ENCODE measurements at regions of chr4 and their contacts with region 1.

Region 1: GRCh38 chr4:98467627-98468072 is 190.8 kb downstream of the TSPAN5 start:
- DNase-seq: peak; percentile 66 to 78 (median 73)
- ATAC-seq: peak; percentile 58 to 97 (median 92)
- H3K4me3 ChIP-seq: peak overlapping the region in 11 of 12 donors; percentile 20 to 53 (median 45)
- H3K27ac ChIP-seq: no peak overlapping the region
- H3K4me1 ChIP-seq: peaks cover 0 to 20% (median 10%) of the 10 kb centered on the region in 12 donors
- H3K27me3 ChIP-seq: no peaks in the 10 kb centered on the region
- CTCF ChIP-seq: peak; percentile 57 to 82 (median 71)
- POLR2A ChIP-seq: no peak

Region 2: DNA sequence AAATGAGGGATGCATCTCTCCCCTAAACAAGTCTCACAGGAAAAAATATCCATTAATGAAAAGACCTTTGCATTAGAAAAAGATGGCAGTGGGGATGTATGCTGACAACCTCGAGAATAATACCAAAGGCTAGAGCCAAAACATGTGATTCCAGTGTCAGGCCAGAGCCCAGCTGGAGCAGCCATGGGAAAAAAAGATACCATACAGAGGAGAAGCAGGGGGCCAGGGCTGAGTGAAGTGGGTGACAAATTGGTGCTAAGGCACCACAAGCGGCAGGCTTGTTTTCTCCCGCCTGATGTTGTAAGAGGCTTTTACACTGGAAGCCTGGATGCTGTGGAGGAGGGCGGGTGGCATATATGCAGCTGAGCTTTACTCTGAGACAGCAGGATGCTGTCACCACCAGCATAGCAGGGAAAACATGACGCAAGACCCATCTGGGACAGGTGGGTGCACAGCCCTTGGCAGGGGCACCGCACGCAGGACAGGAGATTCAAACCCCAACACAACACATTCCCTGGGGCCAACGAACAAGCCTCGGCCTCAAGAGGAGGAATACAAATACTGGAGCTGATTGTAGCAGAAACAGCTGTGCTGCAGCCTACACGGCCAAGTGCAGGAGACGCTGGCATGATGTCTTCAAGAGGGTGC is 98.8 kb after region 1 on chr4:
- intact Hi-C with region 1: no loop called
- DNase-seq: peak in 1 of 5 donors; percentile 34
- ATAC-seq: peak in 3 of 4 donors; percentile 43 to 47 (median 45)
- H3K4me3 ChIP-seq: no peak overlapping the region
- H3K27ac ChIP-seq: peak overlapping the region in 5 of 12 donors; percentile 15 to 68 (median 41)
- H3K4me1 ChIP-seq: peaks cover 0 to 35% (median 14%) of the 10 kb centered on the region in 12 donors
- H3K27me3 ChIP-seq: no peaks in the 10 kb centered on the region
- CTCF ChIP-seq: no peak
- POLR2A ChIP-seq: no peak

Region 3: GRCh38 chr4:98626350-98626749 is 158.7 kb after region 1 on chr4:
- intact Hi-C with region 1: loop called in 3 of 10 experiments (anchors 5 to 10 kb)
- DNase-seq: peak in 3 of 5 donors; percentile 31 to 37 (median 34)
- ATAC-seq: peak in 3 of 4 donors; percentile 76 to 84 (median 78)
- H3K4me3 ChIP-seq: no peak overlapping the region
- H3K27ac ChIP-seq: peak overlapping the region in 1 of 12 donors; percentile 19
- H3K4me1 ChIP-seq: peaks cover 0 to 32% (median 5%) of the 10 kb centered on the region in 12 donors
- H3K27me3 ChIP-seq: no peaks in the 10 kb centered on the region
- CTCF ChIP-seq: no peak
- POLR2A ChIP-seq: no peak

Region 4: GRCh38 chr4:98658287-98659105 is 190.8 kb after region 1 on chr4 and contains the start of gene TSPAN5:
- intact Hi-C with region 1: loop called in 1 of 10 experiments (anchors 10 kb)
- DNase-seq: peak; percentile 78 to 90 (median 86)
- ATAC-seq: peak; percentile 87 to 97 (median 92)
- H3K4me3 ChIP-seq: peak within 1 kb of the TSS; percentile 58 to 98 (median 70)
- H3K27ac ChIP-seq: peak within 1 kb of the TSS in 9 of 12 donors; percentile 56 to 80 (median 76)
- H3K4me1 ChIP-seq: peaks cover 0 to 46% (median 13%) of the 10 kb centered on the region in 12 donors
- H3K27me3 ChIP-seq: peaks cover 0 to 14% (median 0%) of the 10 kb centered on the region in 9 donors
- CTCF ChIP-seq: no peak
- POLR2A ChIP-seq: no peak
- total RNA-seq, gene TSPAN5: 1.6 to 10.2 (median 5.6) TPM

Region 5: DNA sequence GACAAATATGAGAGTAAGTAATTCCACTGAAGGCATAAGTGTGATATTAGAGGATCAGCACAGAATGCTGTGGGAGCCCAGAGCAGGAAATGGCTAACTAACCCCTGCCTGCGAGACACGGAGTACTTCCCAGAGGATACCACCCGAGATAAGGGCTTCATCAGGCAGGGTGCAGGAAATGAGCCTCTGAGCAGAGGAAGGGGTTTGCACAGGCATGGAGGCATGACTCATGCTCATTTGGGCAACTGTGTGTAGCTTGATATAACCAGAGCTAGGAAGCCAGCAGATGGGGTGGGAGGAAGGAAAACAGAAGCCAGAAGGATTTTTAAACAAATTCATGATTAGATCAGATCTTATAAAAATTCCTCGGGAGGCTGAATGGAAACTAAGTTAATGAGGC is 260.8 kb after region 1 on chr4:
- intact Hi-C with region 1: no loop called
- DNase-seq: peak in 1 of 5 donors; percentile 28
- ATAC-seq: peak in 3 of 4 donors; percentile 28 to 77 (median 66)
- H3K4me3 ChIP-seq: no peak overlapping the region
- H3K27ac ChIP-seq: no peak overlapping the region
- H3K4me1 ChIP-seq: no peaks in the 10 kb centered on the region
- H3K27me3 ChIP-seq: no peaks in the 10 kb centered on the region
- CTCF ChIP-seq: no peak
- POLR2A ChIP-seq: no peak

Region 6: DNA sequence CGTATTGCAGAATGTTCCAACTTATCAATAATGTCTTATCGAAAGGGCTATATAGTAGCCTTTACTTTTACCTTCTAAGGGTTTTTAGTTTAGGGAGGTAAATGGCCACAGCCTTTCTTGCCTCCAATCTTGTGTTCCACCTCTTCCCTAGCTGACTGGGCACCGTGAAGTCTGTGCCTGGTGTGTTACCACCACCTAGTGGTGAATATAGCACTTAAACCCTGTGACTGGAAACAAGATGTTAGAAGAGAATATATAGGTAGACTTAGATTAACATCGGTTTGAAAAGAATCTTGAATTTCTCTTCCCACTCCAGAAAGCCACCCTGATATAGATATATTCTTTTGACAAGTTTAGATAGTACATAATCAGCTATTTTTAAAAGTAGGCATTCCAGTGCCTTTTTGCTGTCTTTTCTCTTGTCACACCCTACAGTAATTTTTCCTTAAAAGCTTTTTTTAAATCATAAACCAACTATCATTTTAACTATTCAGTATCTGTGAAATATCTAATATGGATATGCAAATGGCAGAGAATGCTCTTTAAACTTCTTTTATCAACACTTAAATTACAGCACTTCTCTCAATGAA is 995.3 kb after region 1 on chr4:
- intact Hi-C with region 1: loop called in 1 of 10 experiments (anchors 10 kb)
- DNase-seq: peak in 4 of 5 donors; percentile 20 to 33 (median 29)
- ATAC-seq: peak in 3 of 4 donors; percentile 72 to 88 (median 85)
- H3K4me3 ChIP-seq: no peak overlapping the region
- H3K27ac ChIP-seq: no peak overlapping the region
- H3K4me1 ChIP-seq: no peaks in the 10 kb centered on the region
- H3K27me3 ChIP-seq: peaks cover 0 to 23% (median 0%) of the 10 kb centered on the region in 9 donors
- CTCF ChIP-seq: peak; percentile 63 to 82 (median 70)
- POLR2A ChIP-seq: no peak

Measured in heart left ventricle (tissue), 16 donors.